Activated CD4-positive, alpha-beta T cell treated with anti-CD3 and anti-CD28 coated beads, Interleukin-2, amount 10 ng/mL, durations not matched to agents 24 days and 14 days (primary cell): ENCODE measurements at regions of chr4 and their contacts with region 1.

Region 1: GRCh38 chr4:56655209-56655626 is 25.9 kb downstream of the HOPX start:
- DNase-seq: peak; percentile 64
- H3K4me3 Mint-ChIP-seq: peak overlapping the region; percentile 95
- H3K27ac Mint-ChIP-seq: peak overlapping the region; percentile 88
- H3K4me1 Mint-ChIP-seq: peaks cover 59% of the 10 kb centered on the region
- H3K27me3 Mint-ChIP-seq: peaks cover 29% of the 10 kb centered on the region

Region 2: DNA sequence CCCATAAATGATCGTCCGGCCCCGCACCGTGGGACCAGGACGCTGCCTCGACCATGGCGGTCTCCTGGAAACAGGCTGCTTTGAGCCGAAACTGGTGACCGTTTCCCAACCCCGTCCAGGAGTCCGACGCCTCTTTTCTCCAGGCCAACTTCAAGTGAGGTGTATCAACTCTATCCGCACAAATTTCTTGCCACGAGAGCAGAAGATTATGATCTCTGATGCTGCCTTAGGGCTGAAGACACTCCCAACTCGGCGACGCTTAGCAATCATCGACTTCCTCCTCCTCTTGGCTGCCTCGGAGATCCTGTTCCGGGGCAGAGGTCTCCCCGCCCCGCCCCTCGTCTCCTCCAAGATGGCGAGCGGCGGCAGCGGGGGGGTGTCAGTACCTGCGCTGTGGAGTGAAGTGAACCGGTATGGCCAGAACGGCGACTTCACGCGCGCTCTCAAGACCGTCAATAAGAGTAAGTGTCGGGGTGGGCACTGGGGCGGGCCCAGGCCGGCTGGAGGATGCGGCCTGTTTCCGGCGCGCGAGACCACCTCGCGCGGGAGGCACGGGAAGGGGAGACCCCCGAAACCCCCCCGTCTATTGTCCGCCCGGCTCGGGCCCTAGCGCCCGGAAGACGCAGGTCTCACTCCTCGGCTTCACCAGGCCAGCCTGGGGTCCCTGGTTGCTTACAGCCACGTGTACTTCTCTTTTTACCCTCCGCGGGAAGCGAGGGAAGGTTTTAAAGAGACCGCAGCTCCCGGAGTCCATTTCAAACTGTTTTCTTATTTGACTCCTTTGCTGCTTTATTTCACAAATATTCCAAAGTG is 187.7 kb before region 1 on chr4 and contains the start of gene SRP72:
- intact Hi-C with region 1: loop called (anchors 10 kb)
- DNase-seq: peak; percentile 97
- H3K4me3 Mint-ChIP-seq: peak within 1 kb of the TSS; percentile 94
- H3K27ac Mint-ChIP-seq: peak within 1 kb of the TSS; percentile 95
- H3K4me1 Mint-ChIP-seq: peaks cover 45% of the 10 kb centered on the region
- H3K27me3 Mint-ChIP-seq: no peaks in the 10 kb centered on the region
- total RNA-seq, gene SRP72: 202 and 209 TPM in 2 replicates

Region 3: DNA sequence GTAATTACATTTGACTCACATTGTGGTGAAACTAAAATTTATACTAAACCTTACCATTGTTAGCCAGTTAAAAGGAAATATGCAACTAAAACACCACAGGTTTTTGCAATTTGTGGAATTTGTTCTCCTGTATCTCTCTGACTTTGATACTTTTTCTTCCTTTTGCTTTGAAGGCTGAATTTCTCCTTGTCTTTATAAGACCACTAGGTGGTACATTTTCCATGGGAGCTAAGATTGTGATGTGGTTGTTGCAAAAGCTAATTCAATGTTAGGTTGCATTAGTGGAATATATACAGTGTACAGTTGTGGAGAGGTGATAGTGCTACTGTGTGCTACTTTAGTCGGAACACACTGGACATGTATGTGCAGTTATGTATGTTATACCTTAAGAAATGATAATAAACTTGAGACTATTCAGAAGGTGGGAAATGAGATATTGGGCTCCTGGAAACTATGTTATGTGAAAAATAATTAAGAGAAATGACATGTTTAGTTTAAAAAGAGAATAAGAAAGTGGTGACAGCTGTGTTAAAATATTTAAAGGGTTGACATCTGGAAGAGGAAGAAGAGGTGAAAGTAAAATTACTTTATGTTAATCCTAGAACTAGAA is 79.3 kb before region 1 on chr4:
- intact Hi-C with region 1: loop called (anchors 2 kb)
- DNase-seq: no peak
- H3K4me3 Mint-ChIP-seq: no peak overlapping the region
- H3K27ac Mint-ChIP-seq: no peak overlapping the region
- H3K4me1 Mint-ChIP-seq: peaks cover 4% of the 10 kb centered on the region
- H3K27me3 Mint-ChIP-seq: peaks cover 8% of the 10 kb centered on the region

Region 4: DNA sequence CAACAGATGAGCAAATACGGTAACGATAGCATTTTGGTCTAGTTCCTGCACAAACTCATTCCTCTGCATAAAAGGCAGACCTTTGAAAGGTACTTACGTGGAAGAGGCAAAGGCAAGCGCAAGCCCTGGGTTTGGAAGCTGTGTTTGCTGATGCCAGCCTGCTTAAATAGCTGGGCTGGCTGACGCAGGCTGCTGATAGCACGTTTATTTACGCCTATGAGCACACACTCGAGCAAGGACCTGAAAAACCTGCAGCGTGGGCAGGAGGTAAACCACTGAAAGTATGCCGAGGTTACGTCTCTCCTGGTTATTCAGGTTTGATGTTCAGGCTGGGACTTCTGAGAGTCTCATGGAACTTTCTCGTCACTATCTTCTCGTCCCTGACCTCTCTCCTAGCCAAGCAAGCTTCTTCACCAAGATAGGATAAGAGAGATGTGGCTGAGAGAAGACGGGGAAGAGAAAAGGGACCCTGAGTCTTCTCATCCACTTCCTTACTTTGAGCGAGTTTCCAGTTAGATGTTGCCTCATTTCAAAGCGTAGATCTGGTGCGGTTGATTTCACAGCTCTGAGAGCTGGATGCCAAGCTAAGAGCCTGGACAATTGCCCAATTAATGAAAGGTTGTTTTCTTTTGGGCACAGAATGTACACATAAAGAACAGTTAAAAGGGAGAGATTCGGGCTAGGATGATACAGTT is 26.1 kb after region 1 on chr4 and contains the start of gene HOPX:
- intact Hi-C with region 1: loop called (anchors 1 kb)
- DNase-seq: peak; percentile 80
- H3K4me3 Mint-ChIP-seq: peak within 1 kb of the TSS; percentile 52
- H3K27ac Mint-ChIP-seq: peak within 1 kb of the TSS; percentile 47
- H3K4me1 Mint-ChIP-seq: peaks cover 20% of the 10 kb centered on the region
- H3K27me3 Mint-ChIP-seq: peaks cover 53% of the 10 kb centered on the region
- total RNA-seq, gene HOPX: 86.3 and 88.5 TPM in 2 replicates

Region 5: GRCh38 chr4:56757821-56758411 is 102.7 kb after region 1 on chr4:
- intact Hi-C with region 1: loop called (anchors 5 kb)
- DNase-seq: peak; percentile 91
- H3K4me3 Mint-ChIP-seq: peak overlapping the region; percentile 80
- H3K27ac Mint-ChIP-seq: peak overlapping the region; percentile 98
- H3K4me1 Mint-ChIP-seq: peaks cover 47% of the 10 kb centered on the region
- H3K27me3 Mint-ChIP-seq: peaks cover 5% of the 10 kb centered on the region